ENCODE measurements at regions of chr15 and their contacts with region 1.

Region 1: GRCh38 chr15:67784090-67784781 is 41.1 kb upstream of the SKOR1 start:
- DNase-seq: peak; percentile 90
- ATAC-seq: peak; percentile 86
- H3K4me3 ChIP-seq: peak overlapping the region in 1 of 5 experiments; percentile 11
- H3K4me3 Mint-ChIP-seq: peak overlapping the region; percentile 66
- H3K27ac ChIP-seq: peak overlapping the region; percentile 75 to 85
- H3K27ac Mint-ChIP-seq: peak overlapping the region; percentile 91
- H3K4me1 ChIP-seq: peaks cover 44 to 50% of the 10 kb centered on the region in 2 donors
- H3K4me1 Mint-ChIP-seq: peaks cover 59% of the 10 kb centered on the region
- H3K27me3 ChIP-seq: no peaks in the 10 kb centered on the region
- H3K27me3 Mint-ChIP-seq: no peaks in the 10 kb centered on the region
- CTCF ChIP-seq: no peak

Region 2: DNA sequence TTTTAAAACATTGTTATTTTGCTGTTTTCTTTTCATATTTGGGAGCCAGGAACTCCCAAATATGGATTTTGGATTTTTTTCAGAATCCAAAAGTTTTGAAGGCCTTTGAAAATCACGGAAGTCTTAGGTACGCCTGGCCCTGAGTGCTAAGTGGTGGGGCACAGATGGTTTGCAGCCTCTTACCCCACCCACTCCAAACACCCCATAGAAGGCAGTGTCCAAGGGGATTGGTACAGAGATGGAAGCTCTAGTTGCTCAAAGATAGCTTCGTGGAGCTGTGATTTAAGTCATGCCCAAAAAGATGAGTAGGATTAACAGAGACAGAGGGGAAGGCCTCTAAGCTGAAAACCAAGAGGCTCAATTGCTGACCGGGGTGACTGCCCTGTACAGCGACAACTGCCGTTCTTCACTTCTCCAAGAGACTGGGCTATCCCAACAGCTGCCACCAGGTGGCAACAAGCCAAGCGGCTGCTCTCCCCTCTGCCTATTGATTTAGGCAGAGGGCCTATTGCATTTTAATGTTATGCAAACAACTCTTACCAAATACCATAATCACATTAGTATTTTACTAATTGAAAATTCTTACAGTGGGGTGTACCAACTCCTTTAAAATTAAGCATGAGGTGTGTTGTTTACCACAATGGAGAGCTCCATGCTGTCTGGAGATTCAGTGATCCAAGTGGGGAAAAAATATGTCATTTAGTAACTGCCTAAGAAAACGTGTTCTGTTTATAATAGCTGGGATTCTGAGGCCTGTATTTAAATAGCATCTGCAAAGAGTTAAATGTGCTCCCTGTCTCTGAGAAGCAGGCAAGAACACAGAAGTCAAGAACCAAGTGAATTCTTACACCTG is 327.3 kb before region 1 on chr15:
- CTCF ChIA-PET with region 1: interaction called, 14 read pairs
- POLR2A ChIA-PET with region 1: no interaction called
- intact Hi-C with region 1: loop called (anchors 1 kb)
- DNase-seq: peak; percentile 83
- ATAC-seq: peak; percentile 99
- H3K4me3 ChIP-seq: no peak overlapping the region
- H3K4me3 Mint-ChIP-seq: no peak overlapping the region
- H3K27ac ChIP-seq: no peak overlapping the region
- H3K27ac Mint-ChIP-seq: no peak overlapping the region
- H3K4me1 ChIP-seq: peaks cover 0 to 3% of the 10 kb centered on the region in 2 donors
- H3K4me1 Mint-ChIP-seq: peaks cover 2% of the 10 kb centered on the region
- H3K27me3 ChIP-seq: peaks cover 0 to 3% (median 1%) of the 10 kb centered on the region in 4 experiments
- H3K27me3 Mint-ChIP-seq: peaks cover 7% of the 10 kb centered on the region
- CTCF ChIP-seq: peak; percentile 97

Region 3: GRCh38 chr15:67528513-67528912 is 255.7 kb before region 1 on chr15:
- CTCF ChIA-PET with region 1: no interaction called
- POLR2A ChIA-PET with region 1: no interaction called
- intact Hi-C with region 1: no loop called
- DNase-seq: no peak
- ATAC-seq: no peak
- H3K4me3 ChIP-seq: no peak overlapping the region
- H3K4me3 Mint-ChIP-seq: no peak overlapping the region
- H3K27ac ChIP-seq: no peak overlapping the region
- H3K27ac Mint-ChIP-seq: no peak overlapping the region
- H3K4me1 ChIP-seq: no peaks in the 10 kb centered on the region
- H3K4me1 Mint-ChIP-seq: no peaks in the 10 kb centered on the region
- H3K27me3 ChIP-seq: no peaks in the 10 kb centered on the region
- H3K27me3 Mint-ChIP-seq: peaks cover 5% of the 10 kb centered on the region
- CTCF ChIP-seq: no peak

Region 4: DNA sequence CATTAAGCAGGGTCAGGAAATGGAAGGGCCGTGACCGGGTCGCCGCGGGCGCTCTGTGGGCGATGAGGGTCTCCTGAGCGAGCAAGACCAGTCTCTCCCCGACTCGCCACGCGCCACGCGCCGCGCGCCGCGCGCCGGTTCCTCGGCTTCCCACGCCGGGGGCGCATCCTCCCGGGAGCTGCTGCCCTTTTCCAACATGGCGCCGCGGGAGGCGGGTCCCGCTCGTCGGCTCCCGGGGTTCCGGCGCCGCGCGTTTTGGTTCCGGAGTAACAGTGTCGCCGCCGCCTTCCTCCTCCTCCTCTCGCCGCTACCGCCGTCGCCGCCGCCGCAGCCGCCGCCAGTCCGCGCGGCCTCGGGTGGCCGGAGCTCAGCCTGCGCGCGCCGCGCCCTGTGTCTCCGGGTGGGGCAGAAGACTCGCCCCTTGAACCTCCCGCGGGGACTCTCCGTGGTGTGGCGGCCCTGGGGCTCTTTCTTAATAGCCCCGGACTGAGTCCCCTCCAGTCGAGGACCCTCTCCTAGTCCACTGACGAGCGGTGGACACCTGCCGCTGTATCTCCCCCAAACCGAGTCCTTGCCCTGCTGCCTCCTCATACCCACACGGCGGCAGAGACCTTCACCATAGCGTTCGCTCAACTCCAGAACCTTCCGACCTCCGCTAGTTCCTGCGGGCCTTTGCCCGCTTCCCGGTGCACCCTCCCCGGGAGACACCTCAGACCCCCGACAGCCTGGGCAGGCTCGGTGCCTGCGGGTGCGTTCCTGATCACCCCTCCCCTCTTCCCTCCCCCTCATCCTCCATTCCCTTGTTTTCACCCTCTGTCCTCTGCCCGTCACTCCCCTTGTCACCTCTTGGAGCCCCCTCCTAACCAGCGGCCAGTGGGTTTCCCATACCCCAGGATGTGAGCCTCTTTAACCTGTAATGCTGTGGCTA is 241.6 kb before region 1 on chr15 and contains the start of gene MAP2K5:
- CTCF ChIA-PET with region 1: interaction called, 3 read pairs
- POLR2A ChIA-PET with region 1: no interaction called
- intact Hi-C with region 1: loop called (anchors 5 kb)
- DNase-seq: peak; percentile 85
- ATAC-seq: peak; percentile 80
- H3K4me3 ChIP-seq: peak within 1 kb of the TSS; percentile 78 to 99 (median 83)
- H3K4me3 Mint-ChIP-seq: peak within 1 kb of the TSS; percentile 91
- H3K27ac ChIP-seq: peak within 1 kb of the TSS; percentile 79 to 83
- H3K27ac Mint-ChIP-seq: peak within 1 kb of the TSS; percentile 93
- H3K4me1 ChIP-seq: peaks cover 25 to 28% of the 10 kb centered on the region in 2 donors
- H3K4me1 Mint-ChIP-seq: peaks cover 51% of the 10 kb centered on the region
- H3K27me3 ChIP-seq: peaks cover 0 to 6% (median 3%) of the 10 kb centered on the region in 4 experiments
- H3K27me3 Mint-ChIP-seq: peaks cover 5% of the 10 kb centered on the region
- CTCF ChIP-seq: no peak
- total RNA-seq, gene MAP2K5: 40.0 and 47.1 TPM in 2 replicates

Region 5: GRCh38 chr15:67824976-67825879 is 41.0 kb after region 1 on chr15 and contains the start of gene SKOR1:
- CTCF ChIA-PET with region 1: interaction called, 237 read pairs
- POLR2A ChIA-PET with region 1: interaction called, 20 read pairs
- intact Hi-C with region 1: loop called (anchors 2 kb)
- DNase-seq: peak; percentile 51
- ATAC-seq: no peak
- H3K4me3 ChIP-seq: peak within 1 kb of the TSS in 2 of 5 experiments; percentile 8 to 50
- H3K4me3 Mint-ChIP-seq: peak within 1 kb of the TSS; percentile 90
- H3K27ac ChIP-seq: no peak within 1 kb of the TSS
- H3K27ac Mint-ChIP-seq: peak within 1 kb of the TSS; percentile 89
- H3K4me1 ChIP-seq: peaks cover 76 to 90% of the 10 kb centered on the region in 2 donors
- H3K4me1 Mint-ChIP-seq: peaks cover 63% of the 10 kb centered on the region
- H3K27me3 ChIP-seq: peaks cover 0 to 89% (median 73%) of the 10 kb centered on the region in 4 experiments
- H3K27me3 Mint-ChIP-seq: peaks cover 64% of the 10 kb centered on the region
- CTCF ChIP-seq: no peak
- total RNA-seq, gene SKOR1: 0.32 and 0.67 TPM in 2 replicates

Region 6: GRCh38 chr15:67863442-67863987 is 79.3 kb after region 1 on chr15:
- CTCF ChIA-PET with region 1: no interaction called
- POLR2A ChIA-PET with region 1: no interaction called
- intact Hi-C with region 1: loop called (anchors 1 kb)
- DNase-seq: peak; percentile 83
- ATAC-seq: peak; percentile 92
- H3K4me3 ChIP-seq: peak overlapping the region in 4 of 5 experiments; percentile 25 to 60 (median 52)
- H3K4me3 Mint-ChIP-seq: peak overlapping the region; percentile 80
- H3K27ac ChIP-seq: no peak overlapping the region
- H3K27ac Mint-ChIP-seq: peak overlapping the region; percentile 90
- H3K4me1 ChIP-seq: peaks cover 14 to 15% of the 10 kb centered on the region in 2 donors
- H3K4me1 Mint-ChIP-seq: peaks cover 14% of the 10 kb centered on the region
- H3K27me3 ChIP-seq: peaks cover 0 to 4% (median 2%) of the 10 kb centered on the region in 4 experiments
- H3K27me3 Mint-ChIP-seq: peaks cover 9% of the 10 kb centered on the region
- CTCF ChIP-seq: peak; percentile 91

Region 7: DNA sequence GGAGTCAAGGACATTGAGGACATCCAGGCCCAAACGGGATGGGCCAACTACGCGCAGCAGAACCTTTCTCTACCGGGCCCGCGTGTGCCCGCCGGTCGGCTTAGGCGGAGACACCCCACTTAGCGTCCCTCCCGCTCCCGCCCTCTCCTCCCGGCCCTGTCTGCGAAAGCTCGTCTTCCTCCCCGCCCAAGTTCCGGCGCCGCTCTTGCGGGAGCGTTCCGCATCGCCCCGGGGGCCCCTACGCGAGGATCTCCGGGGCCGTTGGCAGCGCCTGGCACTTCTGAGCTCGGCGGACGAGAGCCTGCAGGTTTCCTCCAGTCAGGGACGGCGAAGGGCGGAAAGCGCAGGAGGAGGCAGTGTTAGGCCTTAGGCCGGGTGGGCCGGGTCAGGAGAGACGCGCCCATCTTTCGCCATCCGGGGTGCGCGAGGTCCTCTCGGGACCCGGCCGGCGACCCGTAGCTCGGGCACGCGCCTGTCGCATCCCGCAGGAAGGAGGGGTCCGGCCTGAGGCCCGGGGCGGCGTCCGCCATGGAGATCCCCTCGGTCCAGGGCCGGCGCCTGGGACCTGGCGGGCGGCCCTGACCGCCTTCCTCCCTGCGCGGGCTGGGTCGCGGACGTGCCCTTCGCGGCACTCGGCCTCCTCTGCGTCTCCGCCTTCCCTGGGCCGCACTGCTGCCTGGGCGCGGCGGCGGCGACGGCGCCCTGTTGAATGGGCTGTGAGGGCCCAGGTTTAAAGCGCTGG is 493.5 kb after region 1 on chr15 and contains the start of gene FEM1B:
- CTCF ChIA-PET with region 1: no interaction called
- POLR2A ChIA-PET with region 1: no interaction called
- intact Hi-C with region 1: loop called (anchors 5 kb)
- DNase-seq: peak; percentile 97
- ATAC-seq: peak; percentile 79
- H3K4me3 ChIP-seq: peak within 1 kb of the TSS; percentile 77 to 89 (median 79)
- H3K4me3 Mint-ChIP-seq: peak within 1 kb of the TSS; percentile 98
- H3K27ac ChIP-seq: peak within 1 kb of the TSS; percentile 96
- H3K27ac Mint-ChIP-seq: peak within 1 kb of the TSS; percentile 98
- H3K4me1 ChIP-seq: peaks cover 40% of the 10 kb centered on the region in 2 donors
- H3K4me1 Mint-ChIP-seq: peaks cover 57% of the 10 kb centered on the region
- H3K27me3 ChIP-seq: no peaks in the 10 kb centered on the region
- H3K27me3 Mint-ChIP-seq: no peaks in the 10 kb centered on the region
- CTCF ChIP-seq: no peak
- total RNA-seq, gene FEM1B: 52.4 and 54.4 TPM in 2 replicates